Posterior vena cava (tissue), 2 donors: ENCODE measurements at regions of chr1 and their contacts with region 1.

Region 1: DNA sequence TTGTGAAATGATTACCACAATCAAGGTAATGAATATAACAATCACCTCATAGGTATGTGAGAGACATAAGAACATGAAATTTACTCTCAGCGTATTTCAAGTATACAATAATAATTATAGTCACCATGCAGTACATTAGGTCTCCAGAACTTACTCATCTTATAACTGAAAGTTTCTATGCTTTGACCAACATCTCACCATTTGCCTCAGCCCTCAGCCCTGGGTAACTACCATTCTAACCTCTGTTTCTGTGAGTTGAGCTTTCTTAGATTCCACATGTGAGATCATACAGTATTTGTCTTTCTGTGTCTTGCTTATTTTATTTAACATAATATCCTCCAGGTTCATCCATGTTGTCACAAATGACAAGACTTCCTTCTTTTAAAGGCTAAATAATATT is 57.3 kb downstream of the AGO3 start:
- DNase-seq: no peak

Region 2: GRCh38 chr1:35592991-35593694 is 395.1 kb before region 1 on chr1:
- intact Hi-C with region 1: no loop called
- DNase-seq: no peak

Region 3: DNA sequence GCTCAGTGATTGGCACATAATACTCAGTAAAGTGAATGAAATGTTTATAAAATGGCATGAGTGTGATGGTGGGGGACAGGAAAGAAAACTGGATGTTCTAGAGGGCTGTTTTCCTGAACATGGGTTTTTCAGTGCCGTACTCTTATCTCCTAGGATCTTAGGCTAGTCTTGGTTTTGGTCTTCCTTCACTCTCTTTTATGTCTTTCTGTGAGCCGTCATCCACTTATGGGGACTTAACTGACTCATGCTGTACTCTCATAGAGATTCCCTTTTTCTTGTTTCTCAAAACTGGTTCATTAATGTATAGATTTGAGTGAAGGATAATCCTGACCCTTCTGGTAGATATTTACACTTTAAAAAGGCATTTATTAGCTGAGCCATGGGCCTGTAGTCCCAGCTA is 40.7 kb before region 1 on chr1:
- intact Hi-C with region 1: loop called in 1 of 2 experiments (anchors 10 kb)
- DNase-seq: no peak

Region 4: DNA sequence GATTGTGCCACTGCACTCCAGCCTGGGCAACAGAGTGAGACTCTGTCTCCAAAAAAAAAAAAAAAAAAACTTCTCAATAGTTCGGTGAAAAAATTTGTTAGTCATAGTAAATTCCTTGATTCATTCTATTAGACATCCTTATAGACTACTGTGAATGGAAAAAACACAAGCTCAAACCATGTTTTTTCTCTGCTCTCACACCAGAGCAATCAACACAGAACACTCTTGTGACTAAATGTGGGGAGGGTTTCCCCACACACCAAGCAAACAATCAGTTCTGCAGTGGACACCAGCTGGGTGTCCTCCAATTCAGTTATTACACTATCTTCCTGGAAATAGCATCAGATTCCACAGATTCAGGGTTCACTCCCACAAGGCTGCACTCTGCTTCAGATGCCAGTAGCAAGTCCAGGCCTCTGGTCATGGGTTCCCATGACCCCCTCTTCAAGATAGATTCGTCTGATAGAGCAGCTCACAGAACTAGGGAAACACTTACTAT is 26.5 kb after region 1 on chr1:
- intact Hi-C with region 1: no loop called
- DNase-seq: no peak

Region 5: DNA sequence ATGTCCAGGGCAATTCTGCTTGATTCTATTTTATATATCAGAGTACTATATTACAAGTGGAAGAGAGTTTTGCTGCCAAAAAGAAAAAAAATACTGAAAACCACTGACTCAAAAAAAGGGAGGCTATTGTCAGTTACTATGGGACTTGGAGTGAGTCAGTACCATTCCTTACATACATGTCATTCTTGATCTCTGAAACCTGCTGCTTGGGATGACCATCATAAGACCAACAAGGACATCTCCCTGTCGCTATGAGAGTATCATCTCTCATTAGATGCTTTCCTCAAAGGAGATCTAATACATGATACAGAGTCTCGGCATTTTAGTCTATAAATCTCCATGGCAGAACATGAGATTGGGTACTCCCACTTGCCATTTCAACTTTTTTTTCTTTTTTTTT is 1970.5 kb after region 1 on chr1:
- intact Hi-C with region 1: loop called in 1 of 2 experiments (anchors 10 kb)
- DNase-seq: no peak